AG04450 (cell line): ENCODE measurements at regions of chr21 and their contacts with region 1.

Region 1: GRCh38 chr21:37700641-37701202 is 215.5 kb downstream of the KCNJ6 start:
- DNase-seq: peak; percentile 61
- H3K4me3 ChIP-seq: no peak overlapping the region
- H3K27ac ChIP-seq: no peak overlapping the region
- H3K27me3 ChIP-seq: peaks cover 22% of the 10 kb centered on the region
- CTCF ChIP-seq: peak; percentile 86

Region 2: GRCh38 chr21:37916310-37917051 is 215.8 kb after region 1 on chr21 and contains the start of gene KCNJ6:
- CTCF ChIA-PET with region 1: interaction called, 11 read pairs
- POLR2A ChIA-PET with region 1: no interaction called
- DNase-seq: no peak
- H3K4me3 ChIP-seq: peak within 1 kb of the TSS; percentile 41
- H3K27ac ChIP-seq: no peak within 1 kb of the TSS
- H3K27me3 ChIP-seq: peaks cover 45% of the 10 kb centered on the region
- CTCF ChIP-seq: peak; percentile 83
- polyA plus RNA-seq, gene KCNJ6: 0.02 and 0.06 TPM in 2 replicates

Region 3: GRCh38 chr21:38126669-38127303 is 426.1 kb after region 1 on chr21:
- CTCF ChIA-PET with region 1: interaction called, 29 read pairs
- POLR2A ChIA-PET with region 1: no interaction called
- DNase-seq: no peak
- H3K4me3 ChIP-seq: no peak overlapping the region
- H3K27ac ChIP-seq: no peak overlapping the region
- H3K27me3 ChIP-seq: peaks cover 16% of the 10 kb centered on the region
- CTCF ChIP-seq: peak; percentile 85